ENCODE measurements at regions of chr11 and their contacts with region 1.

Region 1: GRCh38 chr11:6705905-6706535 is 22.9 kb upstream of the MRPL17 start:
- DNase-seq: peak; percentile 51
- ATAC-seq: peak; percentile 51
- H3K4me3 Mint-ChIP-seq: no peak overlapping the region
- H3K27ac Mint-ChIP-seq: peak overlapping the region; percentile 29
- H3K4me1 Mint-ChIP-seq: peaks cover 2% of the 10 kb centered on the region
- H3K27me3 Mint-ChIP-seq: no peaks in the 10 kb centered on the region

Region 2: DNA sequence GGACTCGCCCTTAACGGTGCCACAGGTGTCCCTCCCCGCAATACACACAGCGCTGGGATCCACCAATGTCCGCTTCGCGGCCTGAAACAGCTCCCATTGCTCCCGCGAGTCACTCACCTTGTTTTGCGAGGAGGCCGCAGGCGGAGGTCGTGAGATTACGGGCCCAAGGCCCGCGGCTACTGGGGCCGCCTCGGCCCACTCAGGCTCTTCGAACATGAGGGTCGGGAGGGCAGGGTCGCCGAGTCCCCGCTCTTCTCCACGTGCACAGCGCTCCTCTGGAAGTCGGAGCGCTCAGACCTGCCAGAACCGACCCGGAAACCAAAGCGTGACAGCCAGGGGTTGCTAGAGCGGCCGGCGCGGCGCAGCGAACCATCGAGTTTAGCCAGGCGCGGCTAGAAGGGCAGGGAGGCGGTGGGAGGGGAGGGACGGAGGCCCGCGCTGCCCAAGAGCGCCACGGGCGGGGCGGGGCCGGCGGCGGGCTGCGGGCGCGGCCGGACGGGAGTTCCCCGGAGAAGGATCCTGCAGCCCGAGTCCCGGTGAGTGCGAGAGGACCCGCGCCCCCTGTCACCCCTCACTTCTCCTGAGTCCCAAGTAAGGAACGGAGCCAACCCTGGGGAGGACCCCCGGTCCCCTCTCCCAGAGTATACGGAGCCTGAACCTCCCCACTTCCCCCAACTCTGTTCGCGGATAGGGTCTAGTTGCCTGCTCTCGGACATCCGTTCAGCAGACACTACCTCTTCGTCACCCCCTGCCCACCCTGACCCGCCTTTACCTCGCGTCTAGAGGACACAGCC is 102.5 kb before region 1 on chr11 and contains the starts of genes ILK and RRP8:
- CTCF ChIA-PET with region 1: interaction called, 10 read pairs
- DNase-seq: peak; percentile 94
- ATAC-seq: peak; percentile 78
- H3K4me3 Mint-ChIP-seq: no peak within 1 kb of the TSS
- H3K27ac Mint-ChIP-seq: no peak within 1 kb of the TSS
- H3K4me1 Mint-ChIP-seq: peaks cover 30% of the 10 kb centered on the region
- H3K27me3 Mint-ChIP-seq: no peaks in the 10 kb centered on the region
- total RNA-seq, gene ILK: 151 to 161 TPM
- total RNA-seq, gene RRP8: 25.6 to 33.1 TPM

Region 3: GRCh38 chr11:6719576-6719975 is 13.6 kb after region 1 on chr11:
- CTCF ChIA-PET with region 1: interaction called, 11 read pairs
- DNase-seq: no peak
- ATAC-seq: no peak
- H3K4me3 Mint-ChIP-seq: no peak overlapping the region
- H3K27ac Mint-ChIP-seq: no peak overlapping the region
- H3K4me1 Mint-ChIP-seq: peaks cover 21% of the 10 kb centered on the region
- H3K27me3 Mint-ChIP-seq: no peaks in the 10 kb centered on the region

Region 4: GRCh38 chr11:6746086-6746618 is 40.1 kb after region 1 on chr11:
- CTCF ChIA-PET with region 1: interaction called, 18 read pairs
- DNase-seq: peak; percentile 68
- ATAC-seq: peak; percentile 89
- H3K4me3 Mint-ChIP-seq: no peak overlapping the region
- H3K27ac Mint-ChIP-seq: no peak overlapping the region
- H3K4me1 Mint-ChIP-seq: peaks cover 30% of the 10 kb centered on the region
- H3K27me3 Mint-ChIP-seq: no peaks in the 10 kb centered on the region

Region 5: DNA sequence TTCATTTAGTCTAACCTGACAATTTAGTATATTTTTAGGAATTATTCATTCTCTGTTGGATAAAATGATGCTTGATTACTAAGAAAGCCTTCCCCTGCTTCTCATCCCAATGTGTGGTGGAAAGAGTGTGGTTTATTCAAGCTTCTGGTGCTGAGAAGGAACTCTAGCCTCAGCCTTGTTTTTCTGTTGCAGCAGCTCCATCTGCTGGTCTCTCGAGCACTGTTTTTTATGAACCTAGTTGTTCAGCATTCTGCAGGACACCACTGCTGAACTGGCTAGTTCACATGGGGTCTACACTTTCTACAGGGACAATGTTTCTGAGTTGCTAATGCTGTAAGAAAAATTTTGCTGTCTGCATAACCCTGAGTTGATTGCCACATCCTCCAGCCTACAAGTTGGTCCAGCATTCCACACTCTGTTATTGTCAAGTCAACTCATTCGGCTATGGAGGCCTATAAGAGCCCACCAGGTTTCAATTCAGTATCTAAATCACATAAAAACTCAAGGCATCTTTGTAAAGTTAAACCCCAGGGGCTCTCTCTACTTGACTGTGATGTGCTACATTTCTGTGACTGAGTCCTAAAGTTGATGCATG is 51.5 kb after region 1 on chr11:
- CTCF ChIA-PET with region 1: interaction called, 27 read pairs
- DNase-seq: peak; percentile 72
- ATAC-seq: peak; percentile 88
- H3K4me3 Mint-ChIP-seq: no peak overlapping the region
- H3K27ac Mint-ChIP-seq: no peak overlapping the region
- H3K4me1 Mint-ChIP-seq: peaks cover 1% of the 10 kb centered on the region
- H3K27me3 Mint-ChIP-seq: peaks cover 4% of the 10 kb centered on the region

Measured in activated CD8-positive, alpha-beta memory T cell treated with anti-CD3 and anti-CD28 coated beads, Interleukin-2, amount 10 ng/mL, durations not matched to agents 7 days and 5 days (primary cell).